Panc1 (cell line): ENCODE measurements at regions of chr12 and their contacts with region 1.

Region 1: DNA sequence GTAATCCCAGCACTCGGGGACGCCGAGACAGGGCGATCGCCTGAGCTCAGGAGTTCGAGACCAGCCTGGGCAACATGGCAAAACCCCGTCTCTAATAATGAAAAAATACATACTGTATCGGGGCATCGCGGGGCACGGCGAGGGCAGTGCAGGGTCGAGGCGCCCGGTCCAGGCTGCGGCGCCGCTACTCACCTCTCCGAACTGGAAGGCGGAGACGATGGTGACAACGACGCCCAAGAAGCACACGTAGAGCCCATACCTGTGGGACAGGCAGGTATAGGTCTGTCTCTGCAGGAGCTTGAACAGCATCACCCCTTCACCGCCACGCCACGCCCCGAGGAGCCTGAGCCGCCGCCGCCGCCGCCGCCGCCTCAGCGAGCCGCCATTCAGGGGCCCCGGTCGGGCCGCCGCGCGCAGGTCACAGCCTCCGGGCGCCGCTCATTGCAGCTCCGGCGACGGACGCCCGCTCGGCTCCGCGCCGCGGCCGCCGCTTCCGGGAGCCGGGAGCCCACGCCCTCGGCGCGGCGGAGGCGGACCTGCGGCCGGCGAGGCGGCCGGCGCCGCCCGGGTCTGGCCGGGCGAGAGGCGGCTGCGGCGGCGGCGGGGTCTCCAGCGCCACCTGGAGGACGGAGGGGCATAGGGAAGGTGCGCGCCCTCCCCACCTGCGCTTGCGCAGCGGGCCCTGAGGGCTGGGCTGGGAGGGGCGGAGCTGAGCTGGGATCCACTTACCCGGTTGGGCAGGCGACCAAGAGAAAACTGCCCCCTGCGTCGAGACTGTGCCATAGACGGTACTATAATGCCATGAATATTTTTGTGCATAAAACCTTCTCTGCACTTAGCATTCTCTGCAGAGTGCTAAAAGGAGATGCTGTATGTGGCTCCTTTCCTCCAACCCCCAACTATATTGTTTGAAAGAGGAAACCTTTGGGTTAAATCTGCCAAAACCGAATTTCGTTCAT is at the start of gene GNPTAB:
- DNase-seq: peak; percentile 61
- ATAC-seq: peak; percentile 99
- H3K4me3 ChIP-seq: peak within 1 kb of the TSS; percentile 69 to 78
- H3K27ac ChIP-seq: peak within 1 kb of the TSS; percentile 73
- H3K4me1 ChIP-seq: no peaks in the 10 kb centered on the region; the same call in 1 of the 2 replicates
- H3K27me3 ChIP-seq: no peaks in the 10 kb centered on the region
- CTCF ChIP-seq: peak; percentile 97
- total RNA-seq, gene GNPTAB: 40.8 TPM

Region 2: GRCh38 chr12:101414533-101415119 is 416.0 kb before region 1 on chr12:
- CTCF ChIA-PET with region 1: no interaction called
- POLR2A ChIA-PET with region 1: no interaction called
- in situ Hi-C with region 1: no loop called
- intact Hi-C with region 1: loop called (anchors 5 kb)
- DNase-seq: peak; percentile 68
- ATAC-seq: peak; percentile 82
- H3K4me3 ChIP-seq: no peak overlapping the region
- H3K27ac ChIP-seq: no peak overlapping the region
- H3K4me1 ChIP-seq: no peaks in the 10 kb centered on the region
- H3K27me3 ChIP-seq: no peaks in the 10 kb centered on the region; the same call in 1 of the 2 replicates
- CTCF ChIP-seq: peak; percentile 61; the same call in 1 of the 2 replicates

Region 3: GRCh38 chr12:101773650-101774162 is 56.9 kb before region 1 on chr12:
- CTCF ChIA-PET with region 1: interaction called, 23 read pairs
- POLR2A ChIA-PET with region 1: no interaction called
- in situ Hi-C with region 1: no loop called
- intact Hi-C with region 1: loop called (anchors 2 kb)
- DNase-seq: peak; percentile 33
- ATAC-seq: peak; percentile 89
- H3K4me3 ChIP-seq: no peak overlapping the region
- H3K27ac ChIP-seq: no peak overlapping the region
- H3K4me1 ChIP-seq: no peaks in the 10 kb centered on the region
- H3K27me3 ChIP-seq: no peaks in the 10 kb centered on the region
- CTCF ChIP-seq: peak; percentile 90

Region 4: DNA sequence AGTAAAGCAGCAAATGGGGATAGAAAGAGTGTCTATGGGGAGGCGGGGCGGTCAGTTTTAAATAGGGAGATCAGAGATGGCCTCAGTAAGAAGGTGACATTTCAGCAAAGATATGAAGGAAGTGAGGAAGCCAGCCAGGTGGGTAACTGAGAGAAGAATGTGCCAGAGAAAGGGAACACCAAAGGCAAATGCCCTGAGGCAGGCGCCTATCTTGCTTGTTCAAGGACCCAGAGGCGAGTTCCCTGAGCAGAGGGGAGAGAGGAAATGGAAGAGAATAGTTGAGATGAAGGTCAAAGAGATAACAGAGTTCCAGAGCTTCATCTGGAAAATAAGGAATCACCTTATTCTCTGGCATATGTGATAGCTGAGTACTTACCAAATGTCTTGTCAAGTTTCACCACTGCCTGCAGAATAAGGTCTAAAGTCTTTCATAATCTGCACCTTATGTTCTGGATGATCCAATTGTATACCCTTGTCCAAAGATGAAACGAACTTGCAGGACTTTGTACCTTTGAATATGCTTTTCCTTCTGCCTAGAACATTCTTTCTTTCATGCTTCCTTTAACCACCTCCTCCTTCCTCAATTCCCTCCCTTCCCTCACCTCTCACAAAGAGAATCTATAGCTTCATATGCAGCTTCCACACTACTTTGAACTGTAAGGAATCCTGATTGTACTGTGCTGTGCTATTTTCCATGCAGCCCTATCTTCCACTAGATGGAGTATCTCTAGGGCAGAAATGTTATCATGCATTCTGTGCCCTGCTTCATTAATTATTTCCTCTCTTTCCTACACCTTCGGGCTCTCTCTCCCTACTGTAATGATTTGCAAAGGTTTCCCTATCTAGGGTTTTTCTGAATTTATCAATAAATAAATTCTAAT is 38.4 kb before region 1 on chr12:
- CTCF ChIA-PET with region 1: interaction called, 12 read pairs
- POLR2A ChIA-PET with region 1: no interaction called
- in situ Hi-C with region 1: no loop called
- intact Hi-C with region 1: no loop called
- DNase-seq: no peak
- ATAC-seq: no peak
- H3K4me3 ChIP-seq: no peak overlapping the region
- H3K27ac ChIP-seq: no peak overlapping the region
- H3K4me1 ChIP-seq: no peaks in the 10 kb centered on the region
- H3K27me3 ChIP-seq: no peaks in the 10 kb centered on the region
- CTCF ChIP-seq: peak; percentile 47; the same call in 1 of the 2 replicates

Region 5: DNA sequence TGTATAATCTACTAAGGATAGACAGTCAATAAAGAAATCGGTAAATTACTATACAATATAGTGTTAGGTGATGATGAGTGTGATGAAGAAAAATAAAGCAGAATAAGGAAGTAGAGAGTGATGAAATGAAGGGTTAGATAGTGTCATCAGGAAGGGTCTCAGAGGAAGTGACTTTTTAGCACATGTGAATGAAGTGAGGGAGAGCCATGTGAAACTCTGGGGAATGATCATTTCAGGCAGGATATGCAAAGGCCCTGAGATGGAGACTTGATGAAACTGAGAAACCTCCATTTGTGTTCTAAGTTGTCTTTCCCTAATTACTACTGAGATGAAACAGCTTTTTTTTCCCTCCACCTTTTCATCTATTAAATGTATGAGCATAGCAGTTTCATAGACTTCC is 19.6 kb after region 1 on chr12:
- CTCF ChIA-PET with region 1: no interaction called
- POLR2A ChIA-PET with region 1: no interaction called
- in situ Hi-C with region 1: no loop called
- intact Hi-C with region 1: no loop called
- DNase-seq: no peak
- ATAC-seq: no peak
- H3K4me3 ChIP-seq: no peak overlapping the region
- H3K27ac ChIP-seq: no peak overlapping the region
- H3K4me1 ChIP-seq: no peaks in the 10 kb centered on the region
- H3K27me3 ChIP-seq: no peaks in the 10 kb centered on the region
- CTCF ChIP-seq: no peak

Region 6: GRCh38 chr12:101866615-101867373 is 36.1 kb after region 1 on chr12:
- CTCF ChIA-PET with region 1: interaction called, 4 read pairs
- POLR2A ChIA-PET with region 1: interaction called, 11 read pairs
- in situ Hi-C with region 1: no loop called
- intact Hi-C with region 1: no loop called
- DNase-seq: no peak
- ATAC-seq: no peak
- H3K4me3 ChIP-seq: no peak overlapping the region
- H3K27ac ChIP-seq: no peak overlapping the region
- H3K4me1 ChIP-seq: no peaks in the 10 kb centered on the region
- H3K27me3 ChIP-seq: no peaks in the 10 kb centered on the region
- CTCF ChIP-seq: no peak

Region 7: DNA sequence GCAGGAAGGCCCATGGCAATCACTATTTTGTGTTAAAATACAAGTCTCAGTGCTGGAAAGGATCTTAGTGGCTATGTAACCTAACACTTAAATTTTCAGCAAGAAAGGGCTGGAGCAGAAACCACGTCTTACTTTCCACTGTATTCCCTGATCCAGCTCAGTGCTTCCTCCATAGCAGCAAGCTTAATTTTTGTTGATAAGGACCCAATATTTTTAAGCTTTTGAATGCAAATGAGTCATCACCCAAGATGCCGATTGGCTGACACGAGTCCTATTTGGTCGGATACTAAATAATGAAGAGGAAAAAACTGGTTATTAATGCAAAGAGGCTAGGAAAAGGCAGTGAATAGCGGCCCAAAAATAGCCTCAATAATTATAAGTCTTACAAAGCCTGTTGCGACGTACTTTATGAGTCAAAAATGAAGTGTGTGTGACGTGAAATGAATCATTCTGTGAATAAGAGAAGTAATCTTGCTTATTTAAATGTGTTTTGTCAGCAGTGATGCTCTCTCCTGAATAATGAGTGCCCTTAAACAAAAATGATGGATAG is 696.6 kb after region 1 on chr12:
- CTCF ChIA-PET with region 1: no interaction called
- POLR2A ChIA-PET with region 1: no interaction called
- in situ Hi-C with region 1: no loop called
- intact Hi-C with region 1: no loop called
- DNase-seq: no peak
- ATAC-seq: no peak
- H3K4me3 ChIP-seq: no peak overlapping the region
- H3K27ac ChIP-seq: no peak overlapping the region
- H3K4me1 ChIP-seq: no peaks in the 10 kb centered on the region
- H3K27me3 ChIP-seq: no peaks in the 10 kb centered on the region
- CTCF ChIP-seq: no peak